ENCODE measurements at regions of chr1 and their contacts with region 1.

Region 1: DNA sequence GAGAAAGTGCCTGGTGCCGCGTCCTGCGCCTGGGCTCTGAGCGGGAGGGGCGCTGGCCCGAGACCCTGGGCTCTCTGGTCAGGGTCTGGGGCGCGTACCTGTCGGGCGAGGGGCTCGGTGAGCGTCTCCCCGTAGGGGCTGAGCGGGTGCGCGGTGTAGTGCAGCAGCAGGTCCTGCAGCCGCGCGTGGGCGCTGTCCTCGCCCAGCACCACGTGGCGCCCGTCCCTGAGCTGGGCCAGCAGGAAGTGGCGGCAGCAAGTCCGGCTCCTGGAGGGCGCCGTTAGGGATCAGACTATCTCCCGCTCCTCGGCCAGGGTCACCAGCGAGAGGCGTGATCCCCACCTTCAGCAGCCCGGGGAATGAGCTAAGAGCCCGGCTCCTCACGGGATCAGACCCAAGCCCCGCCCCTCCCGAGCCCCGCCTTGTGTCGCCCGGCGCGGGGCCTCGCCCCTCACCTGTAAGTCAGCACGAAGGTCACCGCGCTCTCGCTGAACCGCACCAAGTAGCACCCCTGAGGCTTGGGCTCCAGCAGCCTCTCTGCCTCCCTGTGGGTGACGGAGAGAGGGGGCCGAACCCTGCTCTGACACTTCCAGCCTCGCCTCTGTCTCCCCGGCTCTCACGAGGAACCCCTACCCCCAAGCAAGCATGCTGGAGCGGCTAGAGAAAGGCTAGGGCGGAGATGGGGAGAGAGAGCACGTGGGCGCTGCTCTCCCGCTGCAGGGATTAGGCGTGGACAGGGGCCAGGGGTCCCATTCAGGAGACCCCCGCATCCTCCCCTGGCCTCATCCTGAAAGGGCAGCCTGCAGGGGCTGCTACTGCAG is 2.7 kb downstream of the SH2D2A start:
- DNase-seq: peak; percentile 68
- H3K4me3 Mint-ChIP-seq: peak overlapping the region; percentile 85
- H3K27ac Mint-ChIP-seq: peak overlapping the region; percentile 100
- H3K4me1 Mint-ChIP-seq: peaks cover 75% of the 10 kb centered on the region
- H3K27me3 Mint-ChIP-seq: no peaks in the 10 kb centered on the region

Region 2: DNA sequence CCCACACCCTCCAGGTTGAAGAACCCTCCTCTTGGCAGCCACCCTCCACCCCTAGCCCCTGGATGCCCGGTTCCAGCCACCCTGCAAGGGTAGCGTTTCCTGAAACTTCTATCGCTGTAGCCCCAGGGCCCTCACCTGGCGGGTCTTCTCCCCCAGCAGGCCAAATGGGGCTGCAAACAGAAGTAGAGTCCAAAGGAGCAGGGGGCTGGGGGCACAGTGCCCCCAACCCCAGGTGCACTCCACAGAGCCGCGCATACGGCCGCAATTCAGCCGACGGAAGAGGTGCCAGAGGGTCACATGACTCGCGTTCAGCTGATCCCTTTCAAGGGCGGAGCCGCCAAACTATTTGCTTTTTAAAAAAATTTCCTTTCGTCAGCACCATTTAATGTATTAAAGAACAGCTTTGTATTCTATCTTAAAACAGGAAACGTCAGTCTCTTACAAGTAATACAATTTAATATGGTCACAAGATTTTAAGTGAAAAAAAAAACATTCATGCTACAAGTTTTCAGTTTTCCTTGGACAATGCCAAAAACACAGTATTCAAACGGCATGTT is 518.5 kb before region 1 on chr1 and contains the start of gene GLMP:
- intact Hi-C with region 1: no loop called
- DNase-seq: peak; percentile 48
- H3K4me3 Mint-ChIP-seq: peak within 1 kb of the TSS; percentile 90
- H3K27ac Mint-ChIP-seq: peak within 1 kb of the TSS; percentile 86
- H3K4me1 Mint-ChIP-seq: peaks cover 15% of the 10 kb centered on the region
- H3K27me3 Mint-ChIP-seq: no peaks in the 10 kb centered on the region
- total RNA-seq, gene GLMP: 17.2 and 20.3 TPM in 2 replicates

Region 3: DNA sequence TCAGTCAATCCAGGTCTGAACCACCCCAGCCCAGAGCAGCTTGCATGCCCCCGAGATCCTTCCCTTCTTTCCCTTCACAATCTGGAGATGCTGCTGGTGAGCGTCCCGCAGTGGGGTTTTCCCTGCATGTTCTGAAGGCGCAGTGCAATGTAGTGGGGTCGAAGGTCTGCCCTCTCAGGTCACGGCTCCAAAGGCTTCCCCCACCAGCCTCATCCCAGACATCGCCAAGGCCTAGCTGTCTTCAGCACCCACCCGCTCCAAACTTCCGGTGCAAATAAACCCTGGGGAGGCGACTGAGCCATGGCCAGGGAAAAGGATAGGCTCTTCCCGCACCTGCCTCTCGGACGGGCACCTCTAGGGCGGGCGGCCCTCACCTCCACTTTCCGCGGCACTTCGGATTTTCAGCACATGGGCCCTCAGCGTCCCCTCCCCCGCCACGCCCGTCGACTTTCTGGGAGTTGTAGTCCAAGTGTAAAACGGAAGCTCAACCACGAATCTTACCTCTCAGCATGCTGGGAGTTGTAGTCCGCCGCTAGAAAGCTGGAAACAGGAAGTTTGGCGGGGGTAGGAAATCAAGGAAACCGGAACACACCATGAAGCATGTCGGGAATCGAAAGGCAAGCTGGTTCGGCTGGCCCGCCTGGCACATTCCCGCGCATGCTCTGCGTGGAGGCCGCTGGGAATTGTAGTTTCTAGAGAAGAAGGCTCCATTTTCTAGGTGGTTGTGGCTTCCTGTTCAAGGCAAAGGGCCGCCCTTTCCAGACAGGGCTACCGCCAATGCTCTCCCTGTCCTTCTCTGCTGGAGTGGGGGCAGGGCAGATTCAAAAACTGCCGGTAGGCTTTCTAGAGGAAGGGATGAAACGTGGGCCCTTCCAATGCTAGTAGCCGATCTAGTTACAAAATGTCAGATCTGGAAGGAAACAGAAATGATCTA is 73.0 kb before region 1 on chr1 and contains the start of gene MRPL24:
- intact Hi-C with region 1: loop called (anchors 1 kb)
- DNase-seq: peak; percentile 97
- H3K4me3 Mint-ChIP-seq: peak within 1 kb of the TSS; percentile 93
- H3K27ac Mint-ChIP-seq: peak within 1 kb of the TSS; percentile 94
- H3K4me1 Mint-ChIP-seq: peaks cover 54% of the 10 kb centered on the region
- H3K27me3 Mint-ChIP-seq: no peaks in the 10 kb centered on the region
- total RNA-seq, gene MRPL24: 132 and 135 TPM in 2 replicates

Region 4: DNA sequence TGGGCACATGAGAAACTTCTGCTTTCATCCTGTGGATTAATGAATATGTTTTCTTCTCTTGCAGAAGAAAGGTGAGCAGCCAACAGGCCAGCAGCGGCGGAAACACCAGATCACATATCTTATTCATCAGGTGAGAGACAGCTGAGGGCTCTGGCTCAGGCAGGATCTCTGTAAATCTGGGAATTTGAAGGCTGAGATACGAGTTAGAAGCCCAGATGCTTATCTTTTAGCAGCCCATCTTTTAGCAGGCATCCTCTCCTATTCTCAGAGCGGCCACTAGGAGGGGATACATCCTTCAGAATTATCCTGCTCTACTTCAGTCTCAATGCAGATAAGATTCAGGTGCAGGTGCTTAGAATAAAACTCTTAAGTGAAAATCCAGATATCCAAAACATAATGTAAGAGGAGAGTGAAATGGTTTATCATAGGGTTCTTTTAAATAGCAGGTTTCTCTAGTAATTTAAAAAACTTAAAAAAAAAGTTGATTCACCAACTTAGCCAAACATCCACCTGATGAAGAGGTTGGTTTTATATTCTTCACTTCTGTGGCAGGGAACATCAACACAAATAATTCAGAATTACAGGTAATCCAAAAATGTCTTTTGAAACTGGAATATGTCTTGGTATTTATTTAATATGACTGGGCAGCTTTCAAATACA is 16.6 kb before region 1 on chr1:
- intact Hi-C with region 1: loop called (anchors 2 kb)
- DNase-seq: peak; percentile 43
- H3K4me3 Mint-ChIP-seq: no peak overlapping the region
- H3K27ac Mint-ChIP-seq: no peak overlapping the region
- H3K4me1 Mint-ChIP-seq: peaks cover 27% of the 10 kb centered on the region
- H3K27me3 Mint-ChIP-seq: no peaks in the 10 kb centered on the region

Region 5: GRCh38 chr1:156848461-156849150 is 34.6 kb after region 1 on chr1:
- intact Hi-C with region 1: loop called (anchors 5 kb)
- DNase-seq: peak; percentile 67
- H3K4me3 Mint-ChIP-seq: peak overlapping the region; percentile 27
- H3K27ac Mint-ChIP-seq: peak overlapping the region; percentile 65
- H3K4me1 Mint-ChIP-seq: peaks cover 34% of the 10 kb centered on the region
- H3K27me3 Mint-ChIP-seq: peaks cover 40% of the 10 kb centered on the region

Region 6: DNA sequence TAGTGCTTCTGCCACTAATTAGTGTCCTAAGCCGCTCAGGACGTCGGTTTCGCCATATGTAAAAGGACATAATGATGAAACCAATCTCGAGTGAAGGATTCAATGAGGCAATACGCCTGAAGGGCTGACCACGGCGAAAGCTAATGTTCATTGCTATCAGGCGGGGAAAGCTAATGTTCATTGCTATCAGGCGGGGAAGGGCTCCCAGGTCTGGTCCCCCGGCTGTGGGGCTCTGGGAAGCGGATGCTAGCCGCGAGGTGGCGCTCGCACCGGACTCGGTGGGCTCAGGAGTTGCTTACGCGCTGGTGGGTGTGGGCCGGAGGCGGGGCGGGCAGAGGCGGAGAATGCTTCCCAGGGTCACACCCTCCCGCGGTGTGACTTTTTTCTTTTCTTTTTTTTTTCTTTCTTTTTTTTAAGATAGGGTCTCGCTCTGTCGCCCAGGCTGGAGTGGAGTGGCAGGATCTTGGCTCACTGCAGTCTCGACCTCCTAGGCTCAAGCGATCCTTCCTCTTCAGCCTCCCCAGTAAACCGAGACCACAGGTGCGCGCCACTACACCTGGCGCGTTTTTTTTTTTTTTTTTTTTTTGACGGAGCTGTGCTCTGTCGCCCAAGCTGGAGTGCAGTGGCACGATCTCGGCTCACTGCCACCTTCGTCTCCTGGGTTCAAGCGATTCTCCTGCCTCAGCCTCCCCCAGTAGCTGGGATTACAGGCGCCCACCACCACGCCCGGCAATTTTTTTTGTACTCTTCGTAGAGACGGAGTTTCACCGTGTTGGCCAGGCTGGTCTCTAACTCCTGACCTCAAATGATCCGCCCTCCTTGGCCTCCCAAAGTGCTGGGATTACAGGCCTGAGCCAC is 78.5 kb after region 1 on chr1:
- intact Hi-C with region 1: loop called (anchors 1 kb)
- DNase-seq: peak; percentile 80
- H3K4me3 Mint-ChIP-seq: peak overlapping the region; percentile 61
- H3K27ac Mint-ChIP-seq: no peak overlapping the region
- H3K4me1 Mint-ChIP-seq: peaks cover 8% of the 10 kb centered on the region
- H3K27me3 Mint-ChIP-seq: peaks cover 58% of the 10 kb centered on the region

Region 7: GRCh38 chr1:157138220-157139051 is 324.5 kb after region 1 on chr1 and contains the start of gene ETV3:
- intact Hi-C with region 1: loop called (anchors 10 kb)
- DNase-seq: peak; percentile 89
- H3K4me3 Mint-ChIP-seq: peak within 1 kb of the TSS; percentile 93
- H3K27ac Mint-ChIP-seq: peak within 1 kb of the TSS; percentile 93
- H3K4me1 Mint-ChIP-seq: peaks cover 71% of the 10 kb centered on the region
- H3K27me3 Mint-ChIP-seq: no peaks in the 10 kb centered on the region
- total RNA-seq, gene ETV3: 47.6 and 51.3 TPM in 2 replicates

Region 8: DNA sequence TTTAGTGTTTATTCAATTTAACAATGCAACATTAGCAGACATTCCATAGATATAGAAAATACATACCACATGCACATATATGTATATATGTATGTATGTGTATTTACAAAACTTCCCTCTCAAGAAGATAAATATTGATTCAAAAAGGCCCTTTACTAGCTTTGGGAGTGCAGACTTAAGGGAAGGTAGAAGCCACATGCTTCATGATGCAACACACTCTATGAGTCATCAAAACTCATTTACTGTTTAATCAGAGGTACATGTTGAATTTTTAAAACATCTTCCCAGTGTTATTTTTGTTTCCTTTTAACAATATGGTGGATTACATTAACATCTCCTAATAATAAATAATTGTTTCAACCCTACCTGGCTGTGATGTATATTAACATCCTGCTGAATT is 1118.1 kb after region 1 on chr1:
- intact Hi-C with region 1: no loop called
- DNase-seq: no peak
- H3K4me3 Mint-ChIP-seq: no peak overlapping the region
- H3K27ac Mint-ChIP-seq: no peak overlapping the region
- H3K4me1 Mint-ChIP-seq: no peaks in the 10 kb centered on the region
- H3K27me3 Mint-ChIP-seq: peaks cover 8% of the 10 kb centered on the region